Ovary (tissue), 10 donors: ENCODE measurements at regions of chr1 and their contacts with region 1.

Region 1: GRCh38 chr1:62295921-62296491 is 23.2 kb downstream of the KANK4 start:
- DNase-seq: no peak
- H3K4me3 ChIP-seq: no peak overlapping the region
- H3K27ac ChIP-seq: no peak overlapping the region
- H3K4me1 ChIP-seq: no peaks in the 10 kb centered on the region
- H3K27me3 ChIP-seq: no peaks in the 10 kb centered on the region
- CTCF ChIP-seq: no peak
- EP300 ChIP-seq: no peak
- POLR2A ChIP-seq: no peak

Region 2: DNA sequence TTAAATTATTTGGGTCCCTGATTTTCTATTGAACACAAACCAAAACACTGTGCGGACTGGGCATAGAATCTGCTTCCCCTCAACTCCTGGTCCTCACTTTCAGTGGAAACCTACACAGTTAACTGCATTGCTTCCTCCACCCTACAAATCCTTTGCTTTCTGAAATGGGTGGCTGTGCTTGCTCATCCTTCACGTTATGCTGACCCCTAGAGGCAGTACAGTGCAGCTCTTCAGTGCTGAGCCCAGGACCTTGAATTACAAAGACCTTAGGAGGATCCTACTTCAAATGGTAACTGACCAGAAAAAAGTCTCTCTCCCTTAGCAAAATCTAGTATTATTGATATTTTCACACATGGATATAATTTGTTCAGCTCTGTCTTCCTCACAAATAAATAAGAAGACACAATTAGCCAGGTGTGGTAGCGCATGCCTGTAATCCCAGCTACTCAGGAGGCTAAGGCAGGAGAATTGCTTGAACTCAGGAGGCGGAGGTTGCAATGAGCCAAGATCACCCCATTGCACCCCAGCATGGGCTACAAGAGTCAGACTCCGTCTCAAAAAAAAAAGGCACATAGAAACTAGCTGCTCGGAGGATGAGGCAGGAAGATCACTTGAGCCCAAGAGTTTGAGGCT is 164.8 kb before region 1 on chr1:
- intact Hi-C with region 1: no loop called
- DNase-seq: peak in 3 of 5 donors; percentile 20 to 40 (median 30)
- H3K4me3 ChIP-seq: no peak overlapping the region
- H3K27ac ChIP-seq: no peak overlapping the region
- H3K4me1 ChIP-seq: no peaks in the 10 kb centered on the region
- H3K27me3 ChIP-seq: no peaks in the 10 kb centered on the region
- CTCF ChIP-seq: peak in 2 of 3 donors; percentile 28 to 50
- EP300 ChIP-seq: no peak
- POLR2A ChIP-seq: no peak

Region 3: GRCh38 chr1:62241377-62242131 is 54.5 kb before region 1 on chr1:
- intact Hi-C with region 1: no loop called
- DNase-seq: peak in 1 of 5 donors; percentile 40
- H3K4me3 ChIP-seq: no peak overlapping the region
- H3K27ac ChIP-seq: no peak overlapping the region
- H3K4me1 ChIP-seq: no peaks in the 10 kb centered on the region
- H3K27me3 ChIP-seq: no peaks in the 10 kb centered on the region
- CTCF ChIP-seq: no peak
- EP300 ChIP-seq: no peak
- POLR2A ChIP-seq: no peak

Region 4: DNA sequence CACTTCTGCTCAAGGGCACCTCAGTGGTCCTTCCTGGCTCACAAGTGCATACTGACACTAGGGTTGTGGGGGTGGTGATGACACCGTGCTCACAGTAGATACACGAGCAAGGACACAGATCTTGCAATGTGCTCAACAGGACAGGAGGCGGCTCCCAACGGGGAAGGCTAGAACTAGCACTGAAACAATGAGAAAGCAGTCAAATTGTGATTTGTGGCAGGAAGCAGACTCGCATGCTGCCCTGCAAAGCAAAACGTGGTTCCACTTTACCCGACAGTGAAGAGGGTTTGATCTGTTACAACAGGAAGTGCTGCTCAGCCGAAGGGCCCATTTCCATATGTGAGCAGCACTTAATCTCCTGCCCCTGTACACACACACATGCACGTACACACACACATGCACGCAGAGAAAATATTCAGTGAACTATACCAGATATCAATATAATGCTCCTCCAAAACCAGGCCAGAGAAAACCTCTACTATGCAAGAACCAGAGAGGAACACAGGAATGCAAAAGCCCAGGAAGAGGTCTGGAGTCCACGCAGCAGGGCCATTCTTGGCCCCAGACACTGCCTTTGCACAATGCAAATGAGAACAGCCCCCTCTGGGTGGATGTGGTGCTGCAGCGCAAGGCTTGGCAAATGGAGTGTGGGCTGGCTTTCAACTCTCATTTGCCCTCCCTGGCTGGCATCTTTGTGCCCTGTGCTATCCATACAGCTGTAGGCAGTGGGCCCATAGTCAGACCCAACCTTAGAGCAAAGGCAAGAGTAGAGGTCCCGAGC is 23.9 kb before region 1 on chr1:
- intact Hi-C with region 1: no loop called
- DNase-seq: no peak
- H3K4me3 ChIP-seq: no peak overlapping the region
- H3K27ac ChIP-seq: no peak overlapping the region
- H3K4me1 ChIP-seq: no peaks in the 10 kb centered on the region
- H3K27me3 ChIP-seq: no peaks in the 10 kb centered on the region
- CTCF ChIP-seq: no peak
- EP300 ChIP-seq: no peak
- POLR2A ChIP-seq: no peak

Region 5: GRCh38 chr1:62333441-62333840 is 37.4 kb after region 1 on chr1:
- intact Hi-C with region 1: loop called in 1 of 4 experiments (anchors 1 kb)
- DNase-seq: no peak
- H3K4me3 ChIP-seq: no peak overlapping the region
- H3K27ac ChIP-seq: no peak overlapping the region
- H3K4me1 ChIP-seq: no peaks in the 10 kb centered on the region
- H3K27me3 ChIP-seq: no peaks in the 10 kb centered on the region
- CTCF ChIP-seq: no peak
- EP300 ChIP-seq: no peak
- POLR2A ChIP-seq: no peak

Region 6: DNA sequence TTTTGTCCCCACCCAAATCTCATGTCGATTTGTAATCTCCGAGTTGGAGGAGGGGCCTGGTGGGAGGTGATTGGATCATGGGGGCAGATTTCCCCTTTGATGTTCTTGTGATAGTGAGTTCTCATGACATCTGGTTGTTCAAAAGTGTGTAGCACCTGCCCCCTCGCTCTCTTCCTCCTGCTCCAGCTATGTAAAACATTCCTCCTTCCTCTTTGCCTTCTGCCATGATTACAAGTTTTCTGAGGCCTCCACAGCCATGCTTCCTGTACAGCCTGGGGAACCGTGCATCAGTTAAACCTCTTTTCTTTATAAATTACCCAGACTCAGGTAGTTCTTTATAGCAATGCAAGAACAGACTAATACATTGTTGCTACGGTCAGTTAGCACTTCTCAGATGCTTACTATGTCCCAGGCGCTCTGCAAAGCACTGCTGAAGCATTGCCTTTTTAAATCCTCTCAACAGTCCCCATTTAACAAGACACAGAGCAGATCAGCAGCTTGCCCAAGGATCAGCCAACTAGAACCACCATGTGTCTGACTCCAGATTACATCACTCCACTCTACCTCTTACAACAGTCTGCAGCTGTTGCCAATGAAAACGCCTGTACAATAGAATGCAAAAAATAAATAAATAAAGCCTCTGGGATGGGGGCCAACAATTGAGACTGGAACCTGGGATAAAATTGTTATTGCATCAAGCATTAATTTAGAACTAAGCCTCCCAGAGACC is 88.4 kb after region 1 on chr1:
- intact Hi-C with region 1: no loop called
- DNase-seq: no peak
- H3K4me3 ChIP-seq: no peak overlapping the region
- H3K27ac ChIP-seq: no peak overlapping the region
- H3K4me1 ChIP-seq: no peaks in the 10 kb centered on the region
- H3K27me3 ChIP-seq: no peaks in the 10 kb centered on the region
- CTCF ChIP-seq: no peak
- EP300 ChIP-seq: no peak
- POLR2A ChIP-seq: no peak